ENCODE measurements at regions of chr1 and their contacts with region 1.

Region 1: DNA sequence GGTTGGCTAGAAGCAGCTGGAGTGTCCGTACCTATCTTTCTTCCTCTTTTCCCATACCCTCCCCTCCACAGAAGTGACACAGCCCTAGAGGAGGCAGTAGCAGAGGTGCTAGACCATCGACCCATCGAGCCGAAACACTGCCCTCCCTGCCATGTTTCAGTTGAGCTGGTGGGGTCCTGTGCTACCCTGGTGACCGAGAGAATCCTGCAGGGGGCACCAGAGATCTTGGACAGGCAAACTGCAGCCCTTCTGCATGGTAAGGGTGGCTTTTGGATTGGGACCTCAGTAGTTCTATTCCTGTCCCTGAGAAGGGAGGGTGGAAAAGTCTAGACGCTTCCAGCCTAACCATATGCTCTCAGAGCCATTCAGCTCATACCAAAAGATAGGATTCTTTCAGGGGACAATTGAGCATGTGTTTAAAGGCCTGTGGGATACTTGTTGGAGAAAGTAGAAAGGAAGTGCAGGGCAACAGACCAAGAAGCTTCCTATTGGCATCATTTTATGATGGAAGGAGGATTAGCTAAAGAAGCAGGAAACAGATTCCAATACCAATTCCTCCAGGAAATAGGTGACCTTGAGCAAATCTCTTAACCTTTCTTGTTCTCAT is 11.7 kb upstream of the BNIPL start:
- DNase-seq: peak; percentile 92
- H3K4me3 Mint-ChIP-seq: peak overlapping the region; percentile 8
- H3K27ac Mint-ChIP-seq: peak overlapping the region; percentile 30
- H3K4me1 Mint-ChIP-seq: peaks cover 6% of the 10 kb centered on the region
- H3K27me3 Mint-ChIP-seq: no peaks in the 10 kb centered on the region

Region 2: DNA sequence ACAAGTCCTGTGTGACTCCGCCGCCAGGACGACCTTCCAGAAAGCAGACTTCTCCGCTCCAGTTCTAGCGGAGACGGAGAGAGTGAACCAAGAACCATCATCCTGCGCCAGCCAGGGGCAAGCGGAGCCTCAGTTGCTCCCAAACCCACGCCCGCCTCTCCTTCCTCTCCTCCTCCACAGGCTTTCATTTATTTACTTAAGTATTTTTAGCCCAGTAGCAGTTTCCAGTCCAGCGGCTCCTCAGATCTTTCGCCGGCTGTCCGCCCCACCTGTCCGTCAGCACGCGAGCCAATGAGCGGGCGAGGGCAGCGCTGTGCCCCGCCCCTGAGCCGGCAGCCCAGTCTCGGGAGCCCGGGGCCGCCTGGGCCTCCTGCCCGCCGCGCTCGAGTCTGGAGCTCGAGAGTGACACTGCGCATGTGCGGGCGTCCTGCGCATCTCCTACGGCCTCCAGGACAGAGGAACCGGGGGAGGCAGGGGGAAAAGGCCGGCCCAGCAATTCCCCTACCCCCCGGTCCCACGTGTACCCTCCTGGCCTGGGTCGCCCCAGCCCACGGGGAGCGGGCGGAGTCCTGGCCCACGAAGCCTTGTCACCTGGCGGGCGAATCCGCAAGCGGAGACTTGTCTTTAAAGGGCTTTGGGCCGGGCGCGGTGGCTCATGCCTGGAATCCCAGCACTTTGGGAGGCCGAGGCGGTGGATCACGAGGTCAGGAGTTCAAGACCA is 509.2 kb before region 1 on chr1 and contains the start of gene FALEC:
- CTCF ChIA-PET with region 1: no interaction called
- DNase-seq: peak; percentile 94
- H3K4me3 Mint-ChIP-seq: peak within 1 kb of the TSS; percentile 85
- H3K27ac Mint-ChIP-seq: peak within 1 kb of the TSS; percentile 83
- H3K4me1 Mint-ChIP-seq: peaks cover 33% of the 10 kb centered on the region
- H3K27me3 Mint-ChIP-seq: peaks cover 4% of the 10 kb centered on the region

Region 3: DNA sequence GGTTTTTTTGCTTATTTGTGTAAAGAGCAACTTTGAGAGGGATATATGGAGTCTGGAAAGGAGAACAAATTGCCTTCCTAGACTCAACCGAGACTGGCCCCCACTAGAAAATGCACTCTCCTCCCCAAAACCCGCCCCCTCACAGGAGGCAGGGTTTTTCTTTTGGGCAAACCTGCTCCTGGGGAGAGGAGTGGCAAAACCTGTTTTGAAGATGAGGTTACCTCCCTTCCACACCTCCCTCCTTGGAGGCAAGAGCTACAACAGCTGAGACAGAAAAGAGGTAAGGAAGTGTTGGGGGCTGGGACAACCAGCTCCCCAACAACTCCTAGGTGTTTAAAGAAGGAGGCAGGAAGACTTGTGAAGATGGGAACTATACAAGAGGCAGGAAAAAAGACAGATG is 11.7 kb after region 1 on chr1 and contains the start of gene BNIPL:
- CTCF ChIA-PET with region 1: interaction called, 16 read pairs
- DNase-seq: no peak
- H3K4me3 Mint-ChIP-seq: no peak within 1 kb of the TSS
- H3K27ac Mint-ChIP-seq: no peak within 1 kb of the TSS
- H3K4me1 Mint-ChIP-seq: peaks cover 5% of the 10 kb centered on the region
- H3K27me3 Mint-ChIP-seq: no peaks in the 10 kb centered on the region

Region 4: DNA sequence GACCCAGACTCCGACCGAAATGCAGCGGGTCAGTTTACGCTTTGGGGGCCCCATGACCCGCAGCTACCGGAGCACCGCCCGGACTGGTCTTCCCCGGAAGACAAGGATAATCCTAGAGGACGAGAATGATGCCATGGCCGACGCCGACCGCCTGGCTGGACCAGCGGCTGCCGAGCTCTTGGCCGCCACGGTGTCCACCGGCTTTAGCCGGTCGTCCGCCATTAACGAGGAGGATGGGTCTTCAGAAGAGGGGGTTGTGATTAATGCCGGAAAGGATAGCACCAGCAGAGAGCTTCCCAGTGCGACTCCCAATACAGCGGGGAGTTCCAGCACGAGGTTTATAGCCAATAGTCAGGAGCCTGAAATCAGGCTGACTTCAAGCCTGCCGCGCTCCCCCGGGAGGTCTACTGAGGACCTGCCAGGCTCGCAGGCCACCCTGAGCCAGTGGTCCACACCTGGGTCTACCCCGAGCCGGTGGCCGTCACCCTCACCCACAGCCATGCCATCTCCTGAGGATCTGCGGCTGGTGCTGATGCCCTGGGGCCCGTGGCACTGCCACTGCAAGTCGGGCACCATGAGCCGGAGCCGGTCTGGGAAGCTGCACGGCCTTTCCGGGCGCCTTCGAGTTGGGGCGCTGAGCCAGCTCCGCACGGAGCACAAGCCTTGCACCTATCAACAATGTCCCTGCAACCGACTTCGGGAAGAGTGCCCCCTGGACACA is 23.4 kb after region 1 on chr1:
- CTCF ChIA-PET with region 1: interaction called, 22 read pairs
- DNase-seq: peak; percentile 75
- H3K4me3 Mint-ChIP-seq: peak overlapping the region; percentile 77
- H3K27ac Mint-ChIP-seq: peak overlapping the region; percentile 76
- H3K4me1 Mint-ChIP-seq: peaks cover 73% of the 10 kb centered on the region
- H3K27me3 Mint-ChIP-seq: no peaks in the 10 kb centered on the region

Region 5: GRCh38 chr1:151059078-151059907 is 34.6 kb after region 1 on chr1 and contains the start of gene CDC42SE1:
- CTCF ChIA-PET with region 1: interaction called, 41 read pairs
- DNase-seq: peak; percentile 90
- H3K4me3 Mint-ChIP-seq: peak within 1 kb of the TSS; percentile 97
- H3K27ac Mint-ChIP-seq: peak within 1 kb of the TSS; percentile 98
- H3K4me1 Mint-ChIP-seq: peaks cover 43% of the 10 kb centered on the region
- H3K27me3 Mint-ChIP-seq: peaks cover 5% of the 10 kb centered on the region

Region 6: DNA sequence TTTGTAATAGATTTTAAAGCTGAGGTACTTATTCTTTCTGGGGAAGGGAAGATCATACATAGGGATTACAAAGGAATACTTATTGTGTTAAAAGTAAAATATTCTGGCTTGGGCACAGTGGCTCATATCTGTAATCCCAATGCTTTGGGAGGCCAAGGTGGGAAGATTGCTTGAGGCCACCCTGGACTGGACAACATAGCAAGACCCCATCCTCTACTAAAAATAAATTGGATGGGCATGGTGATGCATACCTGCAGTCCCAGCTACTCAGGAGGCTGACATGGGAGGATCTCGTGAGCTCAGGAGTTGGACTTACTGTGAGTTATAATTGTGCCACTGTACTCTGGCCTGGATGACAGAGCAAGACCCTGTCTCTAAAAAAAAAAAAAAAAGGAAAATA is 73.5 kb after region 1 on chr1:
- CTCF ChIA-PET with region 1: interaction called, 12 read pairs
- DNase-seq: no peak
- H3K4me3 Mint-ChIP-seq: no peak overlapping the region
- H3K27ac Mint-ChIP-seq: no peak overlapping the region
- H3K4me1 Mint-ChIP-seq: no peaks in the 10 kb centered on the region
- H3K27me3 Mint-ChIP-seq: no peaks in the 10 kb centered on the region

Region 7: DNA sequence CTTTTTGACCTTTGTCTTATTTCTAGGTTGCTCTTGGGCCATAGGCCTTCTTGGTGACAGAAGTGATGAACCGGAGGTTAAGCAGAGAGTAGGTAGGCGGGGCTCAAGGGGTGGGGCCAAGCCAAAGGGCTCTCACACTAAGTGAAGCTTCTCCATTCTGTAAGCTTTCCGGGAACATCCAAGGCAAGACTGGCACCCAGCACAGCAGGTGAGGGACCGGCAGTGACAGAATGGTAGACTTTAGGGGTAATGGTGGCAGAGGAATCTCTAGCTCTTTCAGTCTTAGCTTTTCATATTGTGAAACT is 131.8 kb after region 1 on chr1 and contains the start of gene TNFAIP8L2:
- CTCF ChIA-PET with region 1: interaction called, 34 read pairs
- DNase-seq: peak; percentile 90
- H3K4me3 Mint-ChIP-seq: peak within 1 kb of the TSS; percentile 97
- H3K27ac Mint-ChIP-seq: peak within 1 kb of the TSS; percentile 94
- H3K4me1 Mint-ChIP-seq: peaks cover 56% of the 10 kb centered on the region
- H3K27me3 Mint-ChIP-seq: no peaks in the 10 kb centered on the region